HepG2 (cell line): ENCODE measurements at regions of chrX and their contacts with region 1.

Region 1: GRCh38 chrX:155056877-155057792 is 13.8 kb downstream of the CMC4 start:
- DNase-seq: peak; percentile 43
- ATAC-seq: peak; percentile 96
- H3K4me3 ChIP-seq: peak overlapping the region in 1 of 3 experiments; percentile 41; a peak in 1 of 6 replicates
- H3K27ac ChIP-seq: no peak overlapping the region
- H3K4me1 ChIP-seq: peaks cover 12% of the 10 kb centered on the region
- H3K27me3 ChIP-seq: no peaks in the 10 kb centered on the region
- CTCF ChIP-seq: peak; percentile 85
- EP300 ChIP-seq: no peak
- POLR2A ChIP-seq: no peak
- RAD21 ChIP-seq: peak; percentile 58; the same call in 1 of the 2 replicates

Region 2: DNA sequence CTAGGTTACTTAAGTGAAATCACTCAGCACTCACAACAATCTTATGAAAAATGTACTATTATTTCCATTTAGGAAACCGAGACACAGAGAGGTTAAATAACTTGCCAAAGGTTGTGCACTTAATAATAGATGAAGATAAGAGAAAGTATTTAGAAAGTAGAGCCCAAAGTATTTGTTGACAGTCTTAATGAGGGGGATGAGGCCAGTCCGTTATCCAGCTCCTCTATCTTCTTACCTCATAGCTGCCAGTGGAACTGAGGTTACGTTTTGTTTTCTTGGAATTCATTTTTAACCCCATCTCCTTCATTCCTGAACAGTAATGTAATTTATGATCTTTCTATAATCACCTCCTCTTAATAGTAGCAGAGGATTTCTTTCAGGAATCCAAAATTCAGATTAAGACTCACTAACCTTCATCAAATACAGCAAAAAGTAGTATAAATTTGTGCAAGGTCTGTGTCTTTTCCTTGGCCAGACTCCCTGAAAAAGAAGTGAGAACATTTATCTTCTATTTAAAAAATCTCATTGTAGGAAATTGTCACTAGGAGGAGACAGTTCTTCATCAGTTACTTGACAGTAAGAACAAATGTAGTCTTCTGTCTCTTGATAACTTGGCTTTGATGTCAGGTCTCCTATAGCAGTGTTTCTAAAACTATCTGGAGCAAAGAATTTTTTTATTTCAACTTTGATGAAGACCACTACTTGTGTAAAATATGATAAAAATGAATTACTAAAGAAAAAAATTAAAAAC is 70.1 kb before region 1 on chrX:
- CTCF ChIA-PET with region 1: interaction called, 4 read pairs
- POLR2A ChIA-PET with region 1: no interaction called
- in situ Hi-C with region 1: loop called (anchors 10 kb)
- intact Hi-C with region 1: loop called (anchors 2 kb)
- DNase-seq: no peak
- ATAC-seq: no peak
- H3K4me3 ChIP-seq: peak overlapping the region in 1 of 3 experiments; percentile 10; a peak in 1 of 6 replicates
- H3K27ac ChIP-seq: no peak overlapping the region
- H3K4me1 ChIP-seq: peaks cover 23% of the 10 kb centered on the region
- H3K27me3 ChIP-seq: no peaks in the 10 kb centered on the region
- CTCF ChIP-seq: 0 out of 2 replicates have a peak, but pooled peaks have one; percentile 31
- EP300 ChIP-seq: no peak
- POLR2A ChIP-seq: no peak
- RAD21 ChIP-seq: no peak

Region 3: GRCh38 chrX:155009994-155010472 is 47.1 kb before region 1 on chrX:
- CTCF ChIA-PET with region 1: no interaction called
- POLR2A ChIA-PET with region 1: no interaction called
- in situ Hi-C with region 1: no loop called
- intact Hi-C with region 1: no loop called
- DNase-seq: no peak
- ATAC-seq: no peak
- H3K4me3 ChIP-seq: no peak overlapping the region
- H3K27ac ChIP-seq: no peak overlapping the region
- H3K4me1 ChIP-seq: peaks cover 13% of the 10 kb centered on the region
- H3K27me3 ChIP-seq: no peaks in the 10 kb centered on the region
- CTCF ChIP-seq: no peak
- EP300 ChIP-seq: no peak
- POLR2A ChIP-seq: no peak
- RAD21 ChIP-seq: no peak

Region 4: DNA sequence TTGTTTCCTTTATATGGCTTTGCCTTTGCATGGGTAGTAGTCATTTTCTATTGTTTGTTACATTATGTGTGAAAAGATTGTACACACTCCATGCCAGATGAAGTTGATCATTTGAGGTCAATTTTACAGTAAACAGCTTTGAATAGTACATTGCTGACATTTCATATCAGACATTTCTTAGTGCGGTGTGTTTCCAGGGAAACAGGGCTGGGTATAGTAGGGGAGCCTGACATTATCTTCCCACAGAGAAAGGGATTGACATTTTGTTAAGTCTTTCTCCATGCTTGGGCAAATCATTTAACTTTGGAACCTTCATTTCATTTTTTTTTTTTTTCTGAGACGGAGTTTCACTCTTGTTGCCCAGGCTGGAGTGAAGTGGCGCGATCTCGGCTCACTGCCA is 25.5 kb before region 1 on chrX:
- CTCF ChIA-PET with region 1: no interaction called
- POLR2A ChIA-PET with region 1: no interaction called
- in situ Hi-C with region 1: no loop called
- intact Hi-C with region 1: no loop called
- DNase-seq: no peak
- ATAC-seq: no peak
- H3K4me3 ChIP-seq: no peak overlapping the region
- H3K27ac ChIP-seq: no peak overlapping the region
- H3K4me1 ChIP-seq: peaks cover 15% of the 10 kb centered on the region; the same call in 1 of the 2 replicates
- H3K27me3 ChIP-seq: no peaks in the 10 kb centered on the region; a peak in 1 of 5 replicates
- CTCF ChIP-seq: no peak
- EP300 ChIP-seq: no peak
- POLR2A ChIP-seq: no peak
- RAD21 ChIP-seq: no peak

Region 5: DNA sequence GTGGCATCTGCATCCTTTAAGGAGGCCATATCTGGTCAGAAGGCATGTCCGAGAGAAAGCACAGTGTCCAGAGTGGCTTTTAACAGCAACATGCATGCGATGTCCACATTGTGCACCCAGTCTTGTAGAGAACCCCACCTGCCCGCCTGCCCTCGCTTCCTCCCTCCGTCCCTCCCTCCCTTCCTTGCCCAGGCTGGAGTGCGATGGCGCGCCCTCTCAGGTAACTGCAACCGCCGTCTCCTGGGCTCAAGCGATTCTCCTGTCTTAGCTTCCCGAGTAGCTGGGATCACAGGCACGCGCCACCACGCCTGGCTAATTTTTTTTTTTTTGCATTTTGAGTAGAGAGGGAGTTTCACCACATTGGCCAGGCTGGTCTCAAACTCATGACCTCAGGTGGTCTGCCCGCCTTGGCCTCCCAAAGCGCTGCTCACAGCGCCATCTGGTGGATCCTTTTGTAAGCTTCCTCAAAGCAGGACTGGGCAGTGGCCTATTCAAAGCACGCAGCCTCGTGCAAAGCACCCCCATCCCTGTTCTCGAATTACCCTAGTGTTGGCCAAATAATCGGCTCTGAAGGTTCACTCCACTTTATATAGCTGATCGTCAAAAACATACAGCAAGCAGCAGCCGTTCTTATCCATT is 29.2 kb after region 1 on chrX:
- CTCF ChIA-PET with region 1: no interaction called
- POLR2A ChIA-PET with region 1: no interaction called
- in situ Hi-C with region 1: no loop called
- intact Hi-C with region 1: no loop called
- DNase-seq: peak; percentile 21
- ATAC-seq: peak; percentile 76
- H3K4me3 ChIP-seq: no peak overlapping the region
- H3K27ac ChIP-seq: no peak overlapping the region
- H3K4me1 ChIP-seq: no peaks in the 10 kb centered on the region
- H3K27me3 ChIP-seq: no peaks in the 10 kb centered on the region
- CTCF ChIP-seq: peak; percentile 65
- EP300 ChIP-seq: no peak
- POLR2A ChIP-seq: no peak
- RAD21 ChIP-seq: no peak

Region 6: DNA sequence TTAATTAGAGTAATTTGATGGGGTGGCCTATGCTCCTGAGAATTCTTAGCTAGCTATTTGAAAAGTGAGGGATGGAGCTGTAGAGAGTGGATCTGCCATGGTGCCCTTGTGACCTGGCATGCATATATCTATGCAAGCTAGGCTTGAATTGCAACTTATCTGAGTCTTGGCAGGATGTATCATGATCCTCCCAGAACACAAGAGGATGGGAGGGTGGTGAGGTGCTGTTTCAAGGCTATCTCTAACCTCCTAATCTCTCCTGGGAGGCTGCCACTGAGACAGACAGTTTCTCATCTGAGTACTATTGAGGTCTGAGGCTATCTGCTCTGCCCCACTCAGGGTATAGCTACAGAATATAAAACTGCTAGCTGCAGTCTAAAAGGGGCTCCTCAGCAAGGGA is 70.8 kb after region 1 on chrX:
- CTCF ChIA-PET with region 1: no interaction called
- POLR2A ChIA-PET with region 1: no interaction called
- in situ Hi-C with region 1: no loop called
- intact Hi-C with region 1: no loop called
- DNase-seq: no peak
- ATAC-seq: no peak
- H3K4me3 ChIP-seq: no peak overlapping the region
- H3K27ac ChIP-seq: no peak overlapping the region
- H3K4me1 ChIP-seq: peaks cover 18% of the 10 kb centered on the region
- H3K27me3 ChIP-seq: no peaks in the 10 kb centered on the region
- CTCF ChIP-seq: no peak
- EP300 ChIP-seq: no peak
- POLR2A ChIP-seq: no peak
- RAD21 ChIP-seq: no peak